ENCODE measurements at regions of chr10 and their contacts with region 1.

Region 1: GRCh38 chr10:43229208-43230061 is 37.4 kb downstream of the RASGEF1A start:
- DNase-seq: peak; percentile 65
- ATAC-seq: peak; percentile 78
- H3K4me3 Mint-ChIP-seq: peak overlapping the region; percentile 74
- H3K27ac Mint-ChIP-seq: no peak overlapping the region
- H3K4me1 Mint-ChIP-seq: peaks cover 7% of the 10 kb centered on the region
- H3K27me3 Mint-ChIP-seq: peaks cover 51% of the 10 kb centered on the region
- CTCF ChIP-seq: no peak

Region 2: DNA sequence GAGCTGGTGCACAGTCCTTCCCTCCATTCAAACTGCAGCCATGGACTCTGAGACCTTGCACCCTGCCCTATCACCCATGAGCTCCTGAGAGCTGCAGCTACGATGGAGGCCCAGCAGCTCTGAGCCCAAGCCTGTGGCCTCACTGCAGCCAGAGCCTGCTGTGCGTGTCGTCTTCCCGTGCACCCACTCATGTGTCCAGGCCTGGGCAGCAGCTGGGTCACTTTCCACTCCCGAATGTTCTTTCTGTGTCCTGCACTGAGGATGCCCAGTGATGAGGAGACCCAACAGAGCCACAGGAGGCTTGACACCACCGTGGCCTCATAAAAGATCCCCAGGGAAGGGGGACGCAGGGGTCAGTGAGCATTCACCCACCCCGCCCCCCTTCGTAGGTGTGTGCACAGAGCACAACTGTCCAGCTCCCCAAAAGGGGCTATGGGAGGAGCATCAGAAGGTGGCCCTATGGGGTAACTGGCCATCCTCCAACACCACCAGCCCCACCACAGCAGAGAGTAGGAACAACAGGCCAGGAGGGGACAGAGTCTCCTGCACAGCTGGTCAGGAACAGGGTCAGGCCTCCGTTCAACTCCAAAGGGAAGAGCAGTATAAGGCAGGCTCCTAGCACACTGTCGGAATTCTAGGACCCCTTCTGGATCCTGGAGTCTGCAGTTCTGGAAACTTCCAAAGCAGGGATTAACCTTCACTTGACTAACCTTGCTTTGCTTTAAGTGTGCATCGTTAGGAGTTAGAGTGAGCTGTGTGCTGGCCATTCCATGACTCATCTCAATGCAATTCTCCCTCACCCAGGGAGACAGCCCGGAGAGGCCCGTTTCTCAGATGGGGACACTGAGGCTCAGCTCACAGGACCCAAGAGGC is 15.1 kb before region 1 on chr10:
- CTCF ChIA-PET with region 1: interaction called, 14 read pairs
- POLR2A ChIA-PET with region 1: no interaction called
- DNase-seq: no peak
- ATAC-seq: no peak
- H3K4me3 Mint-ChIP-seq: no peak overlapping the region
- H3K27ac Mint-ChIP-seq: no peak overlapping the region
- H3K4me1 Mint-ChIP-seq: peaks cover 5% of the 10 kb centered on the region
- H3K27me3 Mint-ChIP-seq: no peaks in the 10 kb centered on the region
- CTCF ChIP-seq: no peak

Region 3: DNA sequence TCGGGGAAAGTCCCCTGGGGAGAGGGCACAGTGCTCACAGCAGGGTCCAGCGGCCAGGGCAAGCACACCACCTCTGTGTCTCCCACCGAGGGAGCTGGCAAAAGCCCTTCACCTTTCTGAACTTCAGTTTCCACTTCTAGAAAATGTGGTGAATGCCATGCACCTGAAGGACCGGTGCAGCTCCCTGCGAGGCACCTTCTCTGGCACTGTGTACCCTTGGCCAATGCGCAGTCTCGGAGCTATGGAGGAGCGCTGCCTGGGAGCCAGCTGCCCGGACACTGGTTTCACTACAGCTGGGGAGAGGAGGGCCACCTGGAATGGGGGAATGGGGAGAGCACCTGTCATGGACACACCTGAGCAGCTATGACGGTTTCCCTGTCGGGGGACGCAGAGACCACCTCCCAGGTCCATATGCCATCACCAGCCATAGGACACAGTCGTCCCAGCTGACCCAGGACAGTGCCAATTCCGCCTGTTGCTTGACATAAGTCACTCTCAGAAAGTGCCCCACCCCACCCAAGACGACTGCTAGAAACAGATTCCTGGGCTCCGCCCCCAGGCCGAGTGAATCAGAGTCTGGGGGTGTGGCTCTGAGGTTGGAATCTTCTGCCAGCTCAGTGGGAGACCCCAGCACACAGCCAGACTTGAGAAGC is 20.7 kb after region 1 on chr10:
- CTCF ChIA-PET with region 1: interaction called, 38 read pairs
- POLR2A ChIA-PET with region 1: no interaction called
- DNase-seq: peak; percentile 55
- ATAC-seq: peak; percentile 67
- H3K4me3 Mint-ChIP-seq: no peak overlapping the region
- H3K27ac Mint-ChIP-seq: no peak overlapping the region
- H3K4me1 Mint-ChIP-seq: peaks cover 19% of the 10 kb centered on the region
- H3K27me3 Mint-ChIP-seq: peaks cover 3% of the 10 kb centered on the region; the same call in 1 of the 2 replicates
- CTCF ChIP-seq: no peak

Region 4: GRCh38 chr10:43255634-43256431 is 26.4 kb after region 1 on chr10:
- CTCF ChIA-PET with region 1: interaction called, 38 read pairs
- POLR2A ChIA-PET with region 1: no interaction called
- DNase-seq: peak; percentile 74
- ATAC-seq: peak; percentile 94
- H3K4me3 Mint-ChIP-seq: no peak overlapping the region
- H3K27ac Mint-ChIP-seq: no peak overlapping the region
- H3K4me1 Mint-ChIP-seq: peaks cover 15% of the 10 kb centered on the region
- H3K27me3 Mint-ChIP-seq: no peaks in the 10 kb centered on the region; the same call in 1 of the 2 replicates
- CTCF ChIP-seq: peak; percentile 63